ENCODE measurements at regions of chr7 and their contacts with region 1.

Region 1: DNA sequence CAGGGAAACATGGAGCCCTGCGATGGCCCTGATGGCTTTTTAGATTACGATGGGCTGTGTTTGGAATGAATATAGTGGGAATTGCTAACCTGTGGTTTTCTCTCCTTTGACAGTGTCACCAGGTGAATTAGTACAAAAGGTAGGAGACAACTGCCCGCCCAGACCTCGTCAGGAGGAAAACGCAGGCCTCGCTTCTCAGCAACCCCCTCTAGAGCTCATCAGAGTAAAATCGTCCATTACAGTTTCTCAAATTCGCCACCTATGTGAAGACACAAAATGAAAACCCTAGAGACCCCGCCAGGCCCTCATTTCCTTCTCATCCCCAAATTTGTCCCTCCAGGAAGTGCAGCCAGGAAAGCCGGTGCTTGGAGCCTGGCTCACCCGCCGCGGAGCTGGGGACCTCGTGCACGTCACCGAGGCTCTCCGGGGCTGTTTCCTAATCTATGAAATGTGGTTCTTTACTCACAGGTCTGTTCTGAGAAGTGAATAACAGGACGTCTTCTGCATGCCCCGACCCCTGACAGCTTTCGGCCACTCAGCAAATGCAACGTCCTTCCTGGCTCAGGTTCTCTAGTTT is 143.7 kb downstream of the VIPR2 start:
- DNase-seq: no peak
- ATAC-seq: peak; percentile 91
- H3K4me3 Mint-ChIP-seq: no peak overlapping the region
- H3K27ac Mint-ChIP-seq: no peak overlapping the region
- H3K4me1 Mint-ChIP-seq: peaks cover 11% of the 10 kb centered on the region
- H3K27me3 Mint-ChIP-seq: peaks cover 20% of the 10 kb centered on the region
- CTCF ChIP-seq: no peak

Region 2: GRCh38 chr7:159015454-159016410 is 14.8 kb after region 1 on chr7:
- CTCF ChIA-PET with region 1: interaction called, 10 read pairs
- POLR2A ChIA-PET with region 1: no interaction called
- DNase-seq: no peak
- ATAC-seq: peak; percentile 72
- H3K4me3 Mint-ChIP-seq: no peak overlapping the region
- H3K27ac Mint-ChIP-seq: no peak overlapping the region
- H3K4me1 Mint-ChIP-seq: peaks cover 20% of the 10 kb centered on the region
- H3K27me3 Mint-ChIP-seq: no peaks in the 10 kb centered on the region
- CTCF ChIP-seq: no peak

Measured in WTC11 (cell line).